H1 (cell line): ENCODE measurements at regions of chr13 and their contacts with region 1.

Region 1: GRCh38 chr13:31909864-31910551 is 121.6 kb upstream of the FRY start:
- DNase-seq: no peak
- H3K4me3 ChIP-seq: no peak overlapping the region
- H3K27ac ChIP-seq: no peak overlapping the region
- H3K4me1 ChIP-seq: peaks cover 0 to 3% (median 1%) of the 10 kb centered on the region in 4 experiments; a peak in 1 of 7 replicates
- H3K27me3 ChIP-seq: peaks cover 0 to 1% (median 0%) of the 10 kb centered on the region in 4 experiments; a peak in 1 of 7 replicates
- CTCF ChIP-seq: peak in 2 of 3 experiments; percentile 65 to 75; a peak in 3 of 4 replicates
- EP300 ChIP-seq: no peak
- POLR2A ChIP-seq: no peak
- RAD21 ChIP-seq: peak; percentile 83 to 87

Region 2: DNA sequence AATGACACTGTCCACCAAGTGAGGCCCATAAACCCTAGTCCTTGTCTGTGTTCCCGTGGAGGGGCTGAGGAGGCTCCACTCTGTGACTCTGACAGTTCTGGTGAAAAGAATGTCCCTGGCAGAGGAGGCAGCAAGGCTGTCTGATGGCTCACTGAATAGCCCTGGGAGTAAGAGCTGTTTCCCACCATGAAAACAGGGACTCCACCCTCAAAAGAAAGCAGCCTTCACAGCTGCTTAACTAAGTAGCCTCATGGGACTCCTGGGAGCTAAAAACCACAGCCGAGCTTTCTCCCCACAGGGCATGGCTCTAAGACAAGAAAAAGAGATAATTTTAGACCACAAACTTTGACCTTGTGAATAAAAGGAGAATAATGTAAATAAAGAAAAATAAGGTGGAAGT is 13.6 kb before region 1 on chr13:
- CTCF ChIA-PET with region 1: interaction called, 26 read pairs
- POLR2A ChIA-PET with region 1: no interaction called
- DNase-seq: no peak
- H3K4me3 ChIP-seq: no peak overlapping the region
- H3K27ac ChIP-seq: no peak overlapping the region
- H3K4me1 ChIP-seq: no peaks in the 10 kb centered on the region; a peak in 1 of 7 replicates
- H3K27me3 ChIP-seq: no peaks in the 10 kb centered on the region
- CTCF ChIP-seq: no peak
- EP300 ChIP-seq: no peak
- POLR2A ChIP-seq: no peak
- RAD21 ChIP-seq: no peak

Region 3: DNA sequence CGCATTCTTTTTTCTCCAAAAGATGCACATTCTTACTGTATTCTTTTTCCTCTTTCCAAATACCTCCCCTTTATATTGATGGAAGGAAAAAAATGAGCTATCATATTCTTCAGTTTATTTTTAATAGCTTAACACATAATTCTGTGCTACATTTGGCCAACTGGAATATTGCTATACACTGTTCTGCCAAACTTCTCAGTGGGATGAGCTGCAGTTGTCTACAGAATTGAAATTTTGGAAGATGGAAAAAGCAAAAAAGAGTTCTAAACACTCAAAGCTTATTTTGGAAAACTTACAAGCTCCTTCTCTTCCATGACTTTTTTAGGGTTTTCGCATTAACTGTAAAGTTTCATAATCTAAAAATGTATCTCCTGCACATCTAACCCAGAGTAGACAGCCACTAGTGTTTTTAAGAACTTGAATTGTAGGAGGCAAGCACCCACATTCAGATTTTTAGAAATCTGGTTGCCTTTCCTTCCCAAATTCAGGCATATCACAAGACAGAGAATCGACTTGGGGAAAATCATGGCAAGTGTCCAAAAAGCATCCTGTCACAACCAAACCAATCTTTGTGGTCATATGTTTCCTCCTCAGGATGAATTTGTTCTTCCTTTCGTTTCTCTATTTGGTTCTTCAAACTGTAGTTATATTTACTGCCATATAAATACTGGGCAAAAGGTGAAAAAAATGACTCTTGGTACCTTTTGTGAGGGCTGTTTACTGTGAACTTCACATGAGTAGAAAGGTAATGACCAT is 10.1 kb after region 1 on chr13:
- CTCF ChIA-PET with region 1: interaction called, 16 read pairs
- POLR2A ChIA-PET with region 1: interaction called, 3 read pairs
- DNase-seq: no peak
- H3K4me3 ChIP-seq: no peak overlapping the region
- H3K27ac ChIP-seq: no peak overlapping the region
- H3K4me1 ChIP-seq: peaks cover 0 to 7% (median 5%) of the 10 kb centered on the region in 4 experiments; a peak in 3 of 7 replicates
- H3K27me3 ChIP-seq: no peaks in the 10 kb centered on the region
- CTCF ChIP-seq: no peak
- EP300 ChIP-seq: no peak
- POLR2A ChIP-seq: no peak
- RAD21 ChIP-seq: no peak

Region 4: DNA sequence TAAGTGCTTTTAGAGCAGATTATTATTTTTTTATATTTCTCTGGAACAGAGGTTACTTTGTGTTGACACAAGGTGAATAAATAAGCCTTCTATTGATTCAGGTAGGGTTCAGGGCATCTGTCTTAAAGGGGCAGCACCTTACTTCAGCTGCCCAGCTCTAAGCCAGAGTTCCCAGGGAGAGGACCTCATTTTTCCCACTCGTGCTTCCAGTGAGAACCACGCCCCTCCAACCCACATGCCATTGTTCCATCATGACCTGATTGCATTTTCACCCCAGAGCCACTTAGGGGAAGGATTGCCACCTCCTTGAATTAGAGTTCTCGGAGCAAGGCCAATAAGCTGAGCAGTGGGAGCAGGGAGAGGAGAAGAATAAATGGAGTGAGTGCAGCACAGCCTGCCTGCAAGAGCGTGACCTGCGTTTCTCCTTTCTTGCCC is 17.2 kb after region 1 on chr13:
- CTCF ChIA-PET with region 1: interaction called, 14 read pairs
- POLR2A ChIA-PET with region 1: no interaction called
- DNase-seq: no peak
- H3K4me3 ChIP-seq: no peak overlapping the region
- H3K27ac ChIP-seq: no peak overlapping the region
- H3K4me1 ChIP-seq: peaks cover 0 to 14% (median 5%) of the 10 kb centered on the region in 4 experiments; a peak in 4 of 7 replicates
- H3K27me3 ChIP-seq: no peaks in the 10 kb centered on the region
- CTCF ChIP-seq: no peak
- EP300 ChIP-seq: no peak
- POLR2A ChIP-seq: no peak
- RAD21 ChIP-seq: no peak

Region 5: DNA sequence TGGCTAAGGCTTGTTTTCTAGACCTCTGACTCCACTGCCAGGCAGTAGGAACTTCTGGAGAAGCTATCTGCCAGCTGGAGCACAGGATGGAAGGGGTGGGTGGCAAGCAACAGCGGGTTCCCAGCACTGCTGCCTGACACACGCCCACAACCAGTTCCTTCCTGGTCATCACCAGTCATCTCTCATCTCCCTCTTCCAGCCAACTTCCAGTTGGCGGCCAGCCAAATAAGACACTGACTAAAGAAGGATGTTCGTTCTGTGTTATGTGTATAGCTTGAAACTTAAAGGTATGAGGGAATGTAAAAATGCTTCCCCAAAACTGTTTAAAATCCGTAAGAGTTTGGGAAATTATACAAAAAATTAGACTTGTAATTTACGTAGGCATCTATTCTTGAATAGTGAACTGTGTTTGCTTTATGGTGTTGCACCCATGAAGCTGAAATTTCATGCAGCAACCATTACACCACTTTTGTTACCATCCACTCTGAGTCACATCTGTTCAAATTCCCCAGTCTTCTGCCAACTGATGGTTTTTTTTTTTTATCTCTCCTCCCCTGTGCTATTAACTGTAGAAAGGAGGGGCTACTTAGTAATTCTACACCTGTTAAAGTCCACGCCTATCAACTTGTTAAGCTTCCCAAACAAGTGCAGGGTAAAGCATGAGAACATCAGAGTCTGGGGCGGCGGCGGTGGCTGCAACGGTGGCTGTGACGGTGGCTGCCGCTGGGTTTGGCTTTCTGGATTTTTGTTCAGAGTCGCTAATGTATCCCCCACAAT is 35.4 kb after region 1 on chr13:
- CTCF ChIA-PET with region 1: interaction called, 15 read pairs
- POLR2A ChIA-PET with region 1: no interaction called
- DNase-seq: no peak
- H3K4me3 ChIP-seq: no peak overlapping the region
- H3K27ac ChIP-seq: no peak overlapping the region
- H3K4me1 ChIP-seq: peaks cover 0 to 2% (median 0%) of the 10 kb centered on the region in 4 experiments; a peak in 2 of 7 replicates
- H3K27me3 ChIP-seq: no peaks in the 10 kb centered on the region
- CTCF ChIP-seq: no peak
- EP300 ChIP-seq: no peak
- POLR2A ChIP-seq: no peak
- RAD21 ChIP-seq: no peak

Region 6: GRCh38 chr13:32017474-32017873 is 107.5 kb after region 1 on chr13:
- CTCF ChIA-PET with region 1: interaction called, 11 read pairs
- POLR2A ChIA-PET with region 1: no interaction called
- DNase-seq: no peak
- H3K4me3 ChIP-seq: no peak overlapping the region
- H3K27ac ChIP-seq: no peak overlapping the region
- H3K4me1 ChIP-seq: peaks cover 0 to 6% (median 2%) of the 10 kb centered on the region in 4 experiments; a peak in 2 of 7 replicates
- H3K27me3 ChIP-seq: no peaks in the 10 kb centered on the region
- CTCF ChIP-seq: no peak
- EP300 ChIP-seq: no peak
- POLR2A ChIP-seq: no peak
- RAD21 ChIP-seq: no peak